Upper lobe of right lung (tissue), 1 donor: ENCODE measurements at regions of chr7 and their contacts with region 1.

Region 1: DNA sequence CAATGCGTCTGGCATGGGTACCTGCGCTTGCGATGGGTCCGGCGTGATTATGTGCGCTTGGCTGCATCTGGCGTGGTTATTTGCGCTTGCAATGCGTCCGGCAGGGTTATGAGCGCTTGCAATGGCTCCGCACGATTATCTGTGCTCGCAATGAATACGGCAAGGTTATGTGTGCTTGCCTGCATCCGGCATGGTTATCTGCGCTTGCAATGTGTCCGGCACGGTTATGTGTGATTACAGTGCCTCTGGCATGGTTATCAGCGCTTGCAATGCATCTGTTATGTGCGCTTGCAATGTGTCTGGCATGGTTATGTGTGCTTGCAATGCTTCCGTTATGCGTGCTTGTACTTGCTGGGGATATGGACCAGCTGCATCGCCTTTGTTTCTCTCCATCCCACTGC is 37.7 kb downstream of the RBAK start:
- DNase-seq: no peak
- ATAC-seq: no peak
- H3K4me3 ChIP-seq: no peak overlapping the region
- H3K27ac ChIP-seq: no peak overlapping the region
- H3K4me1 ChIP-seq: no peaks in the 10 kb centered on the region
- H3K27me3 ChIP-seq: peaks cover 8% of the 10 kb centered on the region
- CTCF ChIP-seq: no peak

Region 2: GRCh38 chr7:4797858-4798705 is 285.2 kb before region 1 on chr7:
- intact Hi-C with region 1: loop called (anchors 5 kb)
- DNase-seq: no peak
- ATAC-seq: peak; percentile 87
- H3K4me3 ChIP-seq: no peak overlapping the region
- H3K27ac ChIP-seq: no peak overlapping the region
- H3K4me1 ChIP-seq: no peaks in the 10 kb centered on the region
- H3K27me3 ChIP-seq: no peaks in the 10 kb centered on the region
- CTCF ChIP-seq: peak; percentile 87

Region 3: DNA sequence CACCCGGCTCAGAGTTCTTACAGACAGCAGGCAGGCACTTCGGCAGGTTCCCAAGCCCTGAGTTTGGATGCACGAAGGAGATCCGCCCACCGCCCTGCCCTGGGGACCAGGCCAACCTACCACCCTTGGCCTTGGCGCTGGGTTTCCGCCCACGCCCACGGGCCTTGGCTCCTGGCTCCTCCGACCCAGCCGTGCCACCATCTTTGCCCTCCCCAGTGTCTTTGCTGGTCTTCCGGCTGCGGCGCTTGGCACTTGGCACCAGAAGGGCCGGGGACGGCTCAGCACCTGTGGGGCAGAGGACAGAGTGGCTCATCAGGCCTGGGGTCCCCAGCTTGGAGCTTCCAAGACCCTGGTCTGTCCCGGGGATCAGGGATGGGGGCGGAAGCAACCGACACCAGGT is 231.6 kb after region 1 on chr7:
- intact Hi-C with region 1: no loop called
- DNase-seq: no peak
- ATAC-seq: no peak
- H3K4me3 ChIP-seq: no peak overlapping the region
- H3K27ac ChIP-seq: no peak overlapping the region
- H3K4me1 ChIP-seq: no peaks in the 10 kb centered on the region
- H3K27me3 ChIP-seq: no peaks in the 10 kb centered on the region
- CTCF ChIP-seq: no peak